ENCODE measurements at regions of chr19 and their contacts with region 1.

Region 1: GRCh38 chr19:11137542-11138384 is 17.8 kb downstream of the SPC24 start:
- DNase-seq: peak; percentile 77 to 94
- H3K4me3 ChIP-seq: peak overlapping the region; percentile 29 to 37 (median 32)
- H3K27ac ChIP-seq: peak overlapping the region; percentile 81 to 94 (median 93)
- H3K4me1 ChIP-seq: peaks cover 49 to 63% (median 56%) of the 10 kb centered on the region in 4 donors
- H3K27me3 ChIP-seq: no peaks in the 10 kb centered on the region
- CTCF ChIP-seq: peak in 5 of 7 experiments; percentile 78 to 93 (median 91)
- EP300 ChIP-seq: no peak
- POLR2A ChIP-seq: no peak

Region 2: DNA sequence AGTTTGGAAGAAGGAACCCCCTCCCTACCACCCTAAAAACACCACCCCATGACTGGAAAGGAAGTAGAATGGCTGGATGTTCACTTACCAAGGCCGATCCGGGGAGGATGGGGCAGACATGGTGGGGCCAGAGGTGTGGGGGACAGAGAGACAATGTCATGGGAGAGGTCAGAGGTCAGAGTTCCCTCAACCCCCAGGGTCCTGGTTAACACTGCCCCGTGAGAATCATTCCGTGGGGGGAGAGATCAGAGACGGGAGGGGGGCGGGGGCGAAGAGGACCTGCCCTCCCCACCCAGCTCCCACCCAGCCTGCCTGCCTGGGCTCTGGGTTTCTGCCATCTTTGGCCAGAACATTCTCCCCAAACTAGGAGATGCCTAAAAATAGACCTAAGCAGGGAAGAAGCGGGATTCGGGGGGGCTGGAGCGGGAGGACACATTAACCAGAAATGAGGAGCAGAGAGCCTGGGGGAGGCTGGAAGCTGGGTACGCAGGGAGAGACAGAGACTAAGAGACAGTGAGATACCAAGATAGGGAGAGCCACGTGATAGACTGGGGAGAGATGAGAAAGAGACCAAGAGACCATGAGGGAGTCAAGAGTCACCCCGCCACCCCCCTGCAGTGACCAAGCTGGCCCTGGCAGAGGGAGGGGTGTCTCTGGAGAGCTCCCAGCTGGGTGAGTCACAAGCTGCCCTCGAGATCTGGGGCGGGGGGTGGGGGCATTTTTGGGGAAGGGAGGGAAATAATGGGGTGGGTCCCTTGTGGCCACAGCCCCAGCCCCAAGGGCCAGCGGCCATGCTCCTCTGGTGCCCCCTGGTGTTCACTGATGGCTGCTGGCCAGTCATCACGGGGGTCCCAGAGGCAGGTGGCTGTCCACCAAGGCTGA is 65.7 kb after region 1 on chr19:
- intact Hi-C with region 1: loop called (anchors 2 kb)
- DNase-seq: peak; percentile 59 to 89
- H3K4me3 ChIP-seq: peak overlapping the region in 1 of 4 donors; percentile 13
- H3K27ac ChIP-seq: peak overlapping the region; percentile 61 to 94 (median 82)
- H3K4me1 ChIP-seq: peaks cover 1 to 49% (median 28%) of the 10 kb centered on the region in 4 donors
- H3K27me3 ChIP-seq: no peaks in the 10 kb centered on the region
- CTCF ChIP-seq: peak in 5 of 7 experiments; percentile 70 to 91 (median 82)
- EP300 ChIP-seq: no peak
- POLR2A ChIP-seq: no peak

Region 3: GRCh38 chr19:11223214-11223613 is 85.5 kb after region 1 on chr19:
- intact Hi-C with region 1: no loop called
- DNase-seq: no peak
- H3K4me3 ChIP-seq: no peak overlapping the region
- H3K27ac ChIP-seq: no peak overlapping the region
- H3K4me1 ChIP-seq: no peaks in the 10 kb centered on the region
- H3K27me3 ChIP-seq: no peaks in the 10 kb centered on the region
- CTCF ChIP-seq: no peak
- EP300 ChIP-seq: no peak
- POLR2A ChIP-seq: no peak

Measured in stomach (tissue), 19 donors.